AG04449 (cell line): ENCODE measurements at regions of chr18 and their contacts with region 1.

Region 1: DNA sequence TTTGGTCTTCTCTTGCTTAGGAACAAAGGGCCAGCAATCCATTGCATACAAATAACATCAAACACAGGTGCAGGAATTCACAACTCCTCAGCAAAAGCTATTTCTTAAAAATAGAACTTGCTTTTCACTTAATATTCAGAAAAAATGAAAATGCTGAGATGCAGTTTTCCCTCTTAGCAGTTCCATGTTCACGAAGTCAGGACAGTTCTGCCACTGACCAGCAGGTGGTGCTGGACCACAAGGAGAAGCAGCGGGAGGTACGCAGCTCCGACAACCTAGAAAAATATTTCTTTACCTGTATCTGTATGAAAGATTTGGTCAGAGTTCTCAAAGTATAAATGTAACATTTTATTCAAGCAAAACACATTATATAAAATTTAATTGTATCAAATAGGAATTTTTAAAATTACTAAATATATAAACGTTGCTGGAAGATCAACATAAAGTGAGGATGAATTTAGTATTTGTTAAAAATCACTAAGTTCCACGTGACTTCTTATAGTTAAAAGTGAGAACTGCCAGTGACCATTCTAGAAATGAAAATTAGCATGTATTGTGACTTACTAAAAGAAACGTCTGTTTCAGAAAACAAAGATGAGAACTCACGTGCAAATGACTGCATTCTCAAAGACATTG is 48.8 kb downstream of the ADNP2 start:
- DNase-seq: peak; percentile 10
- H3K4me3 ChIP-seq: no peak overlapping the region
- CTCF ChIP-seq: peak; percentile 89

Region 2: DNA sequence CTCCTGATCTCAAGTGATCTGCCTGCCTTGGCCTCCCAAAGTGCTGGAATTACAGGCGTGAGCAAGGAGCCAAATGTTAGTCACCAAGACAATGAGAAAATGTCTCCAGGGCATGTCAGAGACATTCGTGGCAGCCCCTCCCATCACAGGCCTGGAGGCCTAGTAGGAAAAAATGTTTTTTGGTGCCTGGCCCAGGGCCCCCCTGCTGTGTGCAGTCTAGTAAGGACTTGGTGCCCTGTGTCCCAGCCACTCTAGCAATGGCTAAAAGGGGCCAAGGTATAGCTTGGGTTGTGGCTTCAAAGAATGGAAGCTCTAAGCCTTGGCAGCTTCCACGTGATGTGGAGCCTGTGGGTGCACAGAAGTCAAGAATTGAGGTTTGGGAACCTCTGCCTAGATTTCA is 156.9 kb before region 1 on chr18:
- CTCF ChIA-PET with region 1: no interaction called
- POLR2A ChIA-PET with region 1: no interaction called
- DNase-seq: no peak
- H3K4me3 ChIP-seq: no peak overlapping the region
- CTCF ChIP-seq: no peak

Region 3: GRCh38 chr18:80140455-80140985 is 17.3 kb before region 1 on chr18:
- CTCF ChIA-PET with region 1: interaction called, 68 read pairs
- POLR2A ChIA-PET with region 1: no interaction called
- DNase-seq: no peak
- H3K4me3 ChIP-seq: no peak overlapping the region
- CTCF ChIP-seq: no peak

Region 4: GRCh38 chr18:80147418-80148325 is 10.2 kb before region 1 on chr18:
- CTCF ChIA-PET with region 1: interaction called, 68 read pairs
- POLR2A ChIA-PET with region 1: no interaction called
- DNase-seq: peak; percentile 26
- H3K4me3 ChIP-seq: peak overlapping the region; percentile 75
- CTCF ChIP-seq: no peak

Region 5: GRCh38 chr18:80171054-80171872 is 13.4 kb after region 1 on chr18:
- CTCF ChIA-PET with region 1: interaction called, 133 read pairs
- POLR2A ChIA-PET with region 1: interaction called, 3 read pairs
- DNase-seq: peak; percentile 16
- H3K4me3 ChIP-seq: no peak overlapping the region
- CTCF ChIP-seq: peak; percentile 74

Region 6: GRCh38 chr18:80200171-80200931 is 42.5 kb after region 1 on chr18:
- CTCF ChIA-PET with region 1: interaction called, 20 read pairs
- POLR2A ChIA-PET with region 1: no interaction called
- DNase-seq: no peak
- H3K4me3 ChIP-seq: no peak overlapping the region
- CTCF ChIP-seq: peak; percentile 20

Region 7: DNA sequence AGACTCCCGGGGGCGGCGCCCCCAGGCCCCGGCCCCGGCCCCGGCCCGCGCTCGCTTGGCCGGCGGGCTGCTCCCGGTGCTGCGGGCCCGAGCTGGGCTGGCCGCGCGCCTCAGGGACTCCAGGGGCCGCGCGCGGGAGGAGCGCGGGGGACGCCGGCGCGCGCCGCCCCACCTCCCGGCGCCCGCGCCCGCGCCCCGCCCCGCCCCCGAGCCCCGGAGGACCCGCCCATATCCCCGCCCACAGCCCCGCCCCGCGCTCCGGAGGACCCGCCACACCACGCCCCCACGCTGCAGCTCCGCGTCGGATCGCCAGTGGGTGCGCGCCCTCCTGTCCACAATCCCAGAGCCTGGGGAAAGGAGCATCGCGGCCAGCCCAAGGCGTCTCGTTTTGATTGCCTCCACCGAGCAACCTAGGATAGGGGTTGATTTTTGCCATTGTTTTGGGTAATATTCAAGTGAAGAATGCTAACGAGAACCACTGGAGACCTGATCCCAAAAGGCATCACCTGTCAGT is 89.6 kb after region 1 on chr18 and contains the start of gene PARD6G:
- CTCF ChIA-PET with region 1: interaction called, 195 read pairs
- POLR2A ChIA-PET with region 1: no interaction called
- DNase-seq: no peak
- H3K4me3 ChIP-seq: peak within 1 kb of the TSS; percentile 68
- CTCF ChIP-seq: peak; percentile 46

Region 8: DNA sequence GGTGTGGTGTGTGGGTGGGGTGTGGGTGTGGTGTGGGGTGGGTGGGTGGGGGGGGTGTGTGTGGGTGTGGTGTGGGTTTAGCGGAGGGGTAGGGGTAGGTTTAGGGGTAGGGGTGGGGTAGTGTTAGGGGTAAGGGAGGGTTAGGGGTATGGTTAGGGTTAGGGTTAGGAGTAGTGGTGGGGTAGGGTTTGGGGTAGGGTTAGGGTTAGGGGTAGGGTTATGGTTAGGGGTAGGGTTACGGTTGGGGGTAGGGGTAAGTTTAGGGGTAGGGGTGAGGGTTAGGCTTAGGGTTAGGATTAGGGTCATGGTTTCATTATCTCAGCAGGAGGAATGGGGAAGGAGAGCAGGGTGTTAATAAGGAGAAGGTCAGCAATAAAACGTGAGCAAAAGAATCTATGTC is 100.8 kb after region 1 on chr18:
- CTCF ChIA-PET with region 1: interaction called, 195 read pairs
- POLR2A ChIA-PET with region 1: no interaction called
- DNase-seq: no peak
- H3K4me3 ChIP-seq: no peak overlapping the region
- CTCF ChIP-seq: no peak